ENCODE measurements at regions of chr3 and their contacts with region 1.

Region 1: DNA sequence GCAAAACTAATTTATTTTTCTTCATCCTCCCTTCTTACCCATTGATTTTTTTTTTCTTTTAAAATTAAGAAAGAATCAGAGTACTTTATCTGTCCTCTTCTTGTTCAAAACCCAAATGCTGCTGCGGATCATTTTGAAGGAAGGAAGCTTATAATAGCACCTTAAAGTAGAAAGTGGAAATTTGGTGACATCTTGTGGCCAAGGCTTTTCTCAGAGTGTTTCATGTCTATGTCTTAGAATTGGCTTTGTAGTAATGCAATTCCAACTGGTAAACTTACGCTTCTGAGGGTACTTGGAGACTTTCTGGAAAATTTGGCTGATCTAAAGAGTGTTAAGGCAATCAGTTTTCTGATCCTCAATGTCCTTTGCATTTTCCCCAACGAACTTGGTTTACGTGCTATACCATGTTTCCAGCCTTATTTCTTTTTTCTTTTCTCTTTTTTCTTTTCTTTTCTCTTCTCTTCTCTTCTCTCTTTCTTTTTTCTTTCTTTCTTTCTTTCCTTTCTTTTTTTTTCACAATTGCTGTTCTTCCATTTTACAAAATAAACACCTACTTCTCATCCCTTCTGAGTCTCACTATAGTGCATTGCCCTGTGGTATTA is 30.7 kb downstream of the C3orf38 start:
- DNase-seq: peak in 7 of 9 donors; percentile 9 to 38 (median 30)
- ATAC-seq: no peak
- H3K4me3 ChIP-seq: no peak overlapping the region
- H3K4me3 Mint-ChIP-seq: no peak overlapping the region
- H3K27ac ChIP-seq: no peak overlapping the region
- H3K27ac Mint-ChIP-seq: no peak overlapping the region
- H3K4me1 ChIP-seq: no peaks in the 10 kb centered on the region
- H3K4me1 Mint-ChIP-seq: peaks cover 0 to 8% (median 0%) of the 10 kb centered on the region in 7 donors
- H3K27me3 ChIP-seq: no peaks in the 10 kb centered on the region
- H3K27me3 Mint-ChIP-seq: peaks cover 0 to 14% (median 4%) of the 10 kb centered on the region in 5 donors

Region 2: DNA sequence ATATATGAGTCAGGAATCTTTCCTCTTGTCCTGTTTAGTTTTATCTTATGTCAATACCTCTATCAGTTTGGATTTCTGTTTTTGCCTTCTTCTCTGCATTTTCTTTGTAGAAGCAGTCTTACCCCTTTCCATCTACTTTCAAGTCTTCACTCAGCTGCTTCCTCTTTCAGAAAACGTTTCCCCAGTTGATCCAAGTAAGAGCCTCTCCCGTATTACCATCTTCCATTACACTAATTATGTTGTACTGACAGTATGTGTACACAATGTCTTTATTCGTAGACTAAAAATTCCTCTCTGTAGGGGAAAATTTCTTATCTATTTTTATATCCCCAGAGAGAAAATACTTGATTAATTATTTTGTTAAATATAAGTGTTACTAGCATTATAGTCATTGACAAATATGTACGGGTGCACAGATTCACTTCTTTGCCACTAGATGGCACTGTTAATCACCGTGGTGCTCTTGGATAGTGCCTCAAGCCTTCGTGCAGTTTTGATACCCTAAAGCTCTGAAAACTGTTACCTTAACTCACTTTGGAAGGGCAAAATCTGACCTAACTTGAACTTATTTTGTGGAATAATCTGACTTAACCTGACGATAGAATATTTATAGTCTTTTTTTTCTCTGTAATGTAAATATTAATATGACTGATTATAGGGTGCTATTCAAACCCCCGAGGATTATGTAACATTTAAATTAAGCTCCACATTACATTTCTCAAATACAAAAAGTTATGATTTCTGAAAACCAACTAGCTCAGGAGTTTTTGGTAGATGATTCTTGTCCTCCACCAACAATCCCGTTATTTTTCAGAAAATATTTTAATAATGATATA is 829.9 kb before region 1 on chr3:
- CTCF ChIA-PET with region 1: interaction called, 12 read pairs
- POLR2A ChIA-PET with region 1: no interaction called
- intact Hi-C with region 1: loop called (anchors 1 kb)
- DNase-seq: peak in 7 of 9 donors; percentile 11 to 66 (median 47)
- ATAC-seq: peak; percentile 94
- H3K4me3 ChIP-seq: no peak overlapping the region
- H3K4me3 Mint-ChIP-seq: no peak overlapping the region
- H3K27ac ChIP-seq: no peak overlapping the region
- H3K27ac Mint-ChIP-seq: no peak overlapping the region
- H3K4me1 ChIP-seq: no peaks in the 10 kb centered on the region
- H3K4me1 Mint-ChIP-seq: no peaks in the 10 kb centered on the region
- H3K27me3 ChIP-seq: no peaks in the 10 kb centered on the region
- H3K27me3 Mint-ChIP-seq: peaks cover 0 to 8% (median 4%) of the 10 kb centered on the region in 5 donors

Region 3: GRCh38 chr3:87771341-87772192 is 408.9 kb before region 1 on chr3:
- CTCF ChIA-PET with region 1: no interaction called
- POLR2A ChIA-PET with region 1: no interaction called
- intact Hi-C with region 1: loop called (anchors 1 kb)
- DNase-seq: peak in 7 of 9 donors; percentile 14 to 51 (median 39)
- ATAC-seq: peak; percentile 83
- H3K4me3 ChIP-seq: no peak overlapping the region
- H3K4me3 Mint-ChIP-seq: no peak overlapping the region
- H3K27ac ChIP-seq: no peak overlapping the region
- H3K27ac Mint-ChIP-seq: no peak overlapping the region
- H3K4me1 ChIP-seq: no peaks in the 10 kb centered on the region
- H3K4me1 Mint-ChIP-seq: peaks cover 0 to 2% (median 0%) of the 10 kb centered on the region in 7 donors
- H3K27me3 ChIP-seq: no peaks in the 10 kb centered on the region
- H3K27me3 Mint-ChIP-seq: peaks cover 0 to 30% (median 19%) of the 10 kb centered on the region in 5 donors

Region 4: GRCh38 chr3:87900061-87900460 is 280.4 kb before region 1 on chr3:
- CTCF ChIA-PET with region 1: no interaction called
- POLR2A ChIA-PET with region 1: no interaction called
- intact Hi-C with region 1: loop called in 1 of 2 experiments (anchors 10 kb)
- DNase-seq: peak in 1 of 9 donors; percentile 5
- ATAC-seq: no peak
- H3K4me3 ChIP-seq: no peak overlapping the region
- H3K4me3 Mint-ChIP-seq: no peak overlapping the region
- H3K27ac ChIP-seq: no peak overlapping the region
- H3K27ac Mint-ChIP-seq: no peak overlapping the region
- H3K4me1 ChIP-seq: no peaks in the 10 kb centered on the region
- H3K4me1 Mint-ChIP-seq: no peaks in the 10 kb centered on the region
- H3K27me3 ChIP-seq: no peaks in the 10 kb centered on the region
- H3K27me3 Mint-ChIP-seq: peaks cover 0 to 4% (median 0%) of the 10 kb centered on the region in 5 donors

Measured in naive thymus-derived CD4-positive, alpha-beta T cell (primary cell).